ENCODE measurements at regions of chr1 and their contacts with region 1.

Region 1: GRCh38 chr1:44531785-44532566 is 126.9 kb downstream of the RNF220 start:
- DNase-seq: peak; percentile 84 to 91 (median 88)
- ATAC-seq: peak; percentile 97
- H3K4me3 ChIP-seq: no peak overlapping the region
- H3K27ac ChIP-seq: peak overlapping the region; percentile 55
- H3K4me1 ChIP-seq: peaks cover 13 to 31% of the 10 kb centered on the region in 2 experiments
- H3K27me3 ChIP-seq: no peaks in the 10 kb centered on the region
- CTCF ChIP-seq: peak in 1 of 3 experiments; percentile 2; a peak in 1 of 6 replicates
- EP300 ChIP-seq: peak; percentile 90
- POLR2A ChIP-seq: no peak
- RAD21 ChIP-seq: no peak

Region 2: DNA sequence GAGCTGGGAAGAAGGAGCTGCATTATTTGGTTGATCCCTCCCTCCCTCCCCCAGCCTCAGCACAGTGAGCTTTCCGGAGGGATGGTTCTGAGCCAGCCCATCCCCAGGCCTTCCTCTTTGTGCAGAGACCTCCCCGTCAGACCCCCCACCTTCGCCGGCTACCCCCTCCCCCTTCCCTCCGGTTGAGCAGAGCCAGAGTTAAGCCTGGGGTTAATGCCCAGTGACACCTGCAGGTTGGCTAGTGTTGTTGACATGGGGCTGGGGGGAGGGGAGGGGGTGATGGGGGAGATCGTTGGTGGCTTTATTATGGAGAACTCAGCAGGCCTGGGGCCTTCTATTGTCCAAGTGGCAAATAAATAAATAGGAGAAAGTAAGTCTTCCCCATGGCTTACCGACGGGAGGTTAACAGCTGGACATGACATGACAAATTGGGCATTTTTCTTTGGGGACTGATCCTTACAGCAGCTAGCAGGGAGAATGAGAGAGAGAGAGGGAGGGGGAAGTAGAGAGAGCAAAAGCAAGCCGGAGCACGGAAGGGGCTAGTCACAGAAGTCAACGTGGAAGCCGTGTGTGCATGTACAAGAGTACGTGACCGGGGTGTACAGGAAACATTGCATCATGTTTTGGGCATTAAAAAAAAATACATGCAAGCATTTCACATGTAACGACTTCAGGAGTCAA is 11.2 kb after region 1 on chr1:
- CTCF ChIA-PET with region 1: no interaction called
- POLR2A ChIA-PET with region 1: interaction called, 21 read pairs
- in situ Hi-C with region 1: no loop called
- intact Hi-C with region 1: no loop called
- DNase-seq: peak in 2 of 4 experiments; percentile 65 to 68
- ATAC-seq: peak; percentile 59
- H3K4me3 ChIP-seq: no peak overlapping the region
- H3K27ac ChIP-seq: no peak overlapping the region
- H3K4me1 ChIP-seq: peaks cover 0 to 6% of the 10 kb centered on the region in 2 experiments; a peak in 1 of 5 replicates
- H3K27me3 ChIP-seq: peaks cover 56 to 64% of the 10 kb centered on the region in 2 experiments
- CTCF ChIP-seq: 0 out of 6 replicates have a peak, but pooled peaks of 1 of the 3 experiments have one; percentile 16
- EP300 ChIP-seq: no peak
- POLR2A ChIP-seq: no peak
- RAD21 ChIP-seq: no peak